ENCODE measurements at regions of chr1 and their contacts with region 1.

Region 1: DNA sequence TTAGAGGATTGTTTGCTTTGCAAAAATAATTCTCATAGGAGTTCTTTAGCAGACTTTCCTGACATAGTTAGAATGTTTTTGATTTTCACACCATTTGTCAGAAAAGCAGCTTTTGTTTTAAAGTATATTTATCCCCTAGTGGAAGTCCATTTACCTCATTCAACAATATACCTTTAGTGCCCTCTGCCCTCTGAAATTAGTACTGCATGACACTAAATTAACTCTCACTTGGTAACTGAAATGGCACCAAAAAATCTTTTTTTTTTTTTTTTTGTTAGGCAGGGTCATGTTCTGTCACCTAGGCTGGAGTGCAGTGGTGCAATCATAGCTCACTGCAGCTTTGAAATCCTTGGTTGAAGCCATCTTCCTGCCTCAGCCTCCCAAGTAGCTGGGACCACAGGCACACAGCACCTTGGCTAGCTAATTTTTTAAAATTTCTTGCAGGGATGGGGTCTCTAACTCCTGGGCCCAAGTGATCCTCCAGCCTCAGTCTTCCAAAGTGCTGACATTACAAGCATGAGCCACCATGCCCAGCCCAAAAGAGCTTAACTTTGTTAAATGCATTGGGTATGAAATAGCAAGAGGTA is 13.6 kb downstream of the LRRC42 start:
- DNase-seq: no peak

Region 2: GRCh38 chr1:53765657-53766056 is 194.1 kb before region 1 on chr1:
- CTCF ChIA-PET with region 1: no interaction called
- POLR2A ChIA-PET with region 1: no interaction called
- DNase-seq: no peak

Region 3: DNA sequence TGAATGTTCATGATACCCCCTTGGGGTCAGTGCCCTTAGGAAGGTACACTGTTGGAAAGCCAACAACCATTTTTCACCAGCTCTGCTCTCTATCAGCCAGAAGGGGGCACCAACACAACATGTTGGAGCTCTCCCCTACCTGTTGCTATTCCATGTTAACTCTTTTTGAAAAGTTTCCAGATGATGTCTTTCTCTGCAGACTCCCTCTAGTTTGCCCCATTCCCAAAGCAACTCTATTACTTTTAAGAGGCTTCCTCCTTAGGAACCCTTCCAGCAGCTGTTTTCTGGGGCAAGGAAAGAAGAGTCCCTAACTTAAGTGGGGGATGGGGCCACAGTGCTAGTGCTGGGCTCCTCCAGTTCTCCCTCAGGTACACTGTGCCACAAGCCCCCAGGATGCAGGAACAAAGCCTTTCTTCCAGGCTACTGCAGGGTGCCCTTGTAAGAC is 98.8 kb before region 1 on chr1:
- CTCF ChIA-PET with region 1: interaction called, 40 read pairs
- POLR2A ChIA-PET with region 1: no interaction called
- DNase-seq: peak; percentile 69

Region 4: DNA sequence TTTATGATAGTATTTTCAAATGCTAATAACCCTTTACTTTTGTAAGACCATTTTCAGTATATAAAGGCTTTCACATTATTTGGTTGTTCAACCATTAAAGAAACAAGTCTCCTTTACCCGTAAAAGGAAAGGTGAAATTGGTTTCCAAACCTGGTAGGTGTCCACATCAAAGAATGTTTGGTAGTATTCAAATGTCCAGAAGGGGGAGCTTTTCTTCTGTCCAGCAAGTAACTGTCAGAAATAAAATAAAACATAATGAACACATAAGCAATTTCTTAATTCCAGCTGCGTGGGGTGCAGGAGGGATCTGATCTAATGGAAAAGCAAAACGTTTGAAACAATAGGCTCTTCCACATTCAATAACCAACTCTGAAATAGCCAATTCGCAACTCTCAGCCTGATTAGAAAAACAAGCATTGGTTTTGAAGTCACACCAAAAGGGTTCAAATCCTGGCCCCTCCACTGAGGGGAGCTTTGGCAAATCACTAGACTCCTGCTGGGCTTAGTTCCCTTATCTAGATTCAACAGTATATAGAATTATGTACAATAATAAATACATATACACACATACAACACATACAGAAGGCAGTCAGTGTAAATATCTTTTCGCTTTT is 81.2 kb before region 1 on chr1:
- CTCF ChIA-PET with region 1: interaction called, 10 read pairs
- POLR2A ChIA-PET with region 1: no interaction called
- DNase-seq: peak; percentile 43

Region 5: GRCh38 chr1:53918343-53918742 is 41.4 kb before region 1 on chr1:
- CTCF ChIA-PET with region 1: no interaction called
- POLR2A ChIA-PET with region 1: no interaction called
- DNase-seq: no peak

Region 6: DNA sequence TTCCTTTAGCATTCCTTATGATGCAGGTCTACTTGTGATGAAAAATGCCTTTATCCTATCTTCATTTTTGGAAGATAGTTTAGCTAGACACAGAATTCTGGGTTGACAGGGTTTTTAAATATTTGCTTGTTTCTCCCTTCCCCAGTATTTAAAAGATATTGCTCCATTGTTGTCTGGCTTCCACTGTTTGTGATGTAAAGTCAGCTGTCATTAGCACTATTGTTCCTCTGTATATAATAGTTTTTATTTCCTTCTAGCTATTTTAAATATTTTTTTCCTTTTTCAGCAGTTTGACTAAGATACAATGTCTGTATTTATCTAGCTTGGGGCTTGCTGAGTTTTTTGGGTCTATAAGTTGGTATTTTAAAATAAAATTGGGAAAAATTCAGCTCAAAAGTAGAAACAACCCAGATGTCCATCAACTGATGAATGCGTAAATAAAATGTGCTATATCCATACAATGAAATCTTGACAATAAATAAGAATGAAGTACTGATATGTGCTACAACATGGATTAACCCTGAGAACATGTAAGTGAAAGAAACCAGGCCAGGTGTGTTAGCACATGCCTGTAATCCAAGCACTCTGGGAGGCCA is 25.5 kb before region 1 on chr1:
- CTCF ChIA-PET with region 1: no interaction called
- POLR2A ChIA-PET with region 1: no interaction called
- DNase-seq: no peak

Region 7: GRCh38 chr1:53945433-53946251 is 14.1 kb before region 1 on chr1 and contains the start of gene IFT25:
- CTCF ChIA-PET with region 1: interaction called, 14 read pairs
- POLR2A ChIA-PET with region 1: interaction called, 4 read pairs
- DNase-seq: peak; percentile 95

Measured in HEK293T (cell line).